Ovary (tissue), 10 donors: ENCODE measurements at regions of chr11 and their contacts with region 1.

Region 1: DNA sequence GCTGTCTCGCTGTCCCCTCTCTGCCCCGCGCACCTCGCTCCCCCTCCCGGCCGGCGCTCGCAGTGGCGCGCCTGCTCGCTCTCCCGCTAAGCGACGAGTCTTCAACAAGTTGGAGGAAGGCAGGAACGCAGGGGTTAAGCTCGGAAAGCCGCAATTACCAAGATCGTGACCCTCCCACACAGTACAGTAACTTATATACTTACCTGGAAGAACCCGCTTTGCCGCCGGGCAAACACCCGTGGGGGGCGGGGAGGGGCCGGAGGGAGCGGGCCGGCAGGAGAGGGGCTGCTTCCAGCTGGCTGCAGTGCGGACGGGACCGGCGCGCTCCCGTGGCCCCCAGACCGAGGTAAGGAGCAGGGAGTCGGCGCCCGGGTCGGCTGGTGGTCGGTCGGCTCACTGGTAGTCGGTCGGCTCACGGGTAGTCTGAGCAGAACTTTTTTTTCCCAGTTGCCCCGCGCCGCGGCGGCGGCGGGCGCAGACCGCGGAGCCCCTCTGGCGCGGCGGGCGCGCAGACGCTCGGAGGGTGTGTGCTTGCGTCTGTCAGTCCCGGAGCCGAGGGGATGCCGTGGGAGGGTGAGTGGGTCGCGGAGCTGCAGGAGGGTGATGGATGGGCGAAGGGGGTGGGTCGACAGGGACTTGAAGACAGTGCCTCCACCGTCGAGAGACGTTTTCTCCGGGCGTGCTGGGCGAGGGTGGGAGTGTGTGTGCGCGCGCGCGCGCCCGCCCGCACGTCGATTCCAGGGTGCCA is 101.2 kb upstream of the HSD17B12 start:
- DNase-seq: no peak
- H3K4me3 ChIP-seq: peak overlapping the region; percentile 6
- H3K27ac ChIP-seq: no peak overlapping the region
- H3K4me1 ChIP-seq: peaks cover 13% of the 10 kb centered on the region
- H3K27me3 ChIP-seq: no peaks in the 10 kb centered on the region
- CTCF ChIP-seq: no peak
- EP300 ChIP-seq: no peak
- POLR2A ChIP-seq: no peak

Region 2: GRCh38 chr11:43810929-43811596 is 231.7 kb after region 1 on chr11:
- intact Hi-C with region 1: loop called in 1 of 4 experiments (anchors 10 kb)
- DNase-seq: no peak
- H3K4me3 ChIP-seq: no peak overlapping the region
- H3K27ac ChIP-seq: no peak overlapping the region
- H3K4me1 ChIP-seq: no peaks in the 10 kb centered on the region
- H3K27me3 ChIP-seq: no peaks in the 10 kb centered on the region
- CTCF ChIP-seq: peak in 1 of 3 donors; percentile 10
- EP300 ChIP-seq: no peak
- POLR2A ChIP-seq: no peak